Posterior vena cava (tissue), 2 donors: ENCODE measurements at regions of chr3 and their contacts with region 1.

Region 1: GRCh38 chr3:71305231-71306206 is 278.0 kb downstream of the FOXP1 start:
- DNase-seq: no peak

Region 2: GRCh38 chr3:70531063-70531657 is 774.4 kb before region 1 on chr3:
- intact Hi-C with region 1: loop called in 1 of 2 experiments (anchors 10 kb)
- DNase-seq: no peak

Region 3: GRCh38 chr3:70716832-70717231 is 588.7 kb before region 1 on chr3:
- intact Hi-C with region 1: loop called (anchors 5 to 10 kb)
- DNase-seq: peak; percentile 69

Region 4: GRCh38 chr3:71064288-71064955 is 241.1 kb before region 1 on chr3:
- intact Hi-C with region 1: loop called in 1 of 2 experiments (anchors 10 kb)
- DNase-seq: peak; percentile 85

Region 5: GRCh38 chr3:71583566-71584449 is 278.3 kb after region 1 on chr3 and contains the start of gene FOXP1:
- intact Hi-C with region 1: loop called in 1 of 2 experiments (anchors 5 kb)
- DNase-seq: peak; percentile 91
- total RNA-seq, gene FOXP1: 109 to 112 TPM